ENCODE measurements at regions of chr12 and their contacts with region 1.

Region 1: GRCh38 chr12:27645671-27646070 is 50.6 kb upstream of the REP15 start:
- DNase-seq: no peak
- H3K4me3 ChIP-seq: no peak overlapping the region
- H3K27ac ChIP-seq: no peak overlapping the region
- H3K4me1 ChIP-seq: peaks cover 10 to 21% of the 10 kb centered on the region in 2 donors
- H3K27me3 ChIP-seq: no peaks in the 10 kb centered on the region
- CTCF ChIP-seq: no peak
- POLR2A ChIP-seq: no peak

Region 2: GRCh38 chr12:27424631-27425230 is 220.9 kb before region 1 on chr12:
- intact Hi-C with region 1: loop called (anchors 5 kb)
- DNase-seq: peak; percentile 27 to 36
- H3K4me3 ChIP-seq: no peak overlapping the region
- H3K27ac ChIP-seq: peak overlapping the region in 2 of 3 donors; percentile 14 to 44
- H3K4me1 ChIP-seq: peaks cover 4 to 10% of the 10 kb centered on the region in 2 donors
- H3K27me3 ChIP-seq: no peaks in the 10 kb centered on the region
- CTCF ChIP-seq: peak; percentile 27 to 63 (median 42)
- POLR2A ChIP-seq: no peak

Measured in thyroid gland (tissue), 4 donors.